Calu3 (cell line): ENCODE measurements at regions of chr5 and their contacts with region 1.

Region 1: GRCh38 chr5:127492854-127493738 is 24.3 kb upstream of the PRRC1 start:
- DNase-seq: no peak
- H3K4me3 Mint-ChIP-seq: no peak overlapping the region
- H3K27ac Mint-ChIP-seq: no peak overlapping the region
- H3K4me1 Mint-ChIP-seq: no peaks in the 10 kb centered on the region
- H3K27me3 Mint-ChIP-seq: peaks cover 45% of the 10 kb centered on the region
- CTCF ChIP-seq: peak; percentile 95

Region 2: DNA sequence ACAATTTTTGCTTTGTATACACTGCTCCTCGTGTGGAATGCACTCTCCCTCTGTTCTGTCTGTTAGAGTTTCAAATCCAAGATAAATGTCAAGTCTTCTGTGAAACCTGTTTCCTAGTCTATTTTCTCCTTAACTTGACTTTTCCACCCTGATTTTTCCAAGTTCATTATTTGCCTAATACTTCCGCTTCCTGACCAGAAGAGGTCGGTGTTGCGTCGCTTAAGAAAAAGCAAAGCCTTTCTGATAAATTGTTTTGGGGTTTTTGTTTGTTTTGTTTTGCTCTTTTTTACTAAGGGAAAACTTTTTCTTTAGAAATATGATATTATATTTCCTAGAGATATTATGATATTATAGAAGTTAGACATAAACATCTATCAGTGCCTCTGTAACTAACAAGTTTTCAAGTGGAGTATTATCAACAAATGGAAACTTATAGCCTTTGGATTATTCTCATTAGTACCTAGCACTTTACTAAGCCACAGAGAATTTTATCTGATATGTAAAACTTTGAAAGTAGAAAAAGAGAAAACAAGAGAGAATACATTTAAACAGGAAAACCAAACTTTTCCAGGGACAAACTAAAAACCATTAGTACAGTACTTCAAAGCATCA is 836.6 kb before region 1 on chr5:
- CTCF ChIA-PET with region 1: no interaction called
- intact Hi-C with region 1: loop called (anchors 5 kb)
- DNase-seq: peak; percentile 13
- H3K4me3 Mint-ChIP-seq: no peak overlapping the region
- H3K27ac Mint-ChIP-seq: no peak overlapping the region
- H3K4me1 Mint-ChIP-seq: no peaks in the 10 kb centered on the region
- H3K27me3 Mint-ChIP-seq: no peaks in the 10 kb centered on the region
- CTCF ChIP-seq: peak; percentile 82

Region 3: GRCh38 chr5:126837906-126838539 is 655.1 kb before region 1 on chr5:
- CTCF ChIA-PET with region 1: no interaction called
- intact Hi-C with region 1: loop called (anchors 10 kb)
- DNase-seq: no peak
- H3K4me3 Mint-ChIP-seq: no peak overlapping the region
- H3K27ac Mint-ChIP-seq: no peak overlapping the region
- H3K4me1 Mint-ChIP-seq: no peaks in the 10 kb centered on the region
- H3K27me3 Mint-ChIP-seq: no peaks in the 10 kb centered on the region
- CTCF ChIP-seq: no peak

Region 4: GRCh38 chr5:127153031-127153430 is 340.1 kb before region 1 on chr5:
- CTCF ChIA-PET with region 1: no interaction called
- intact Hi-C with region 1: no loop called
- DNase-seq: no peak
- H3K4me3 Mint-ChIP-seq: no peak overlapping the region
- H3K27ac Mint-ChIP-seq: no peak overlapping the region
- H3K4me1 Mint-ChIP-seq: no peaks in the 10 kb centered on the region
- H3K27me3 Mint-ChIP-seq: no peaks in the 10 kb centered on the region
- CTCF ChIP-seq: no peak

Region 5: DNA sequence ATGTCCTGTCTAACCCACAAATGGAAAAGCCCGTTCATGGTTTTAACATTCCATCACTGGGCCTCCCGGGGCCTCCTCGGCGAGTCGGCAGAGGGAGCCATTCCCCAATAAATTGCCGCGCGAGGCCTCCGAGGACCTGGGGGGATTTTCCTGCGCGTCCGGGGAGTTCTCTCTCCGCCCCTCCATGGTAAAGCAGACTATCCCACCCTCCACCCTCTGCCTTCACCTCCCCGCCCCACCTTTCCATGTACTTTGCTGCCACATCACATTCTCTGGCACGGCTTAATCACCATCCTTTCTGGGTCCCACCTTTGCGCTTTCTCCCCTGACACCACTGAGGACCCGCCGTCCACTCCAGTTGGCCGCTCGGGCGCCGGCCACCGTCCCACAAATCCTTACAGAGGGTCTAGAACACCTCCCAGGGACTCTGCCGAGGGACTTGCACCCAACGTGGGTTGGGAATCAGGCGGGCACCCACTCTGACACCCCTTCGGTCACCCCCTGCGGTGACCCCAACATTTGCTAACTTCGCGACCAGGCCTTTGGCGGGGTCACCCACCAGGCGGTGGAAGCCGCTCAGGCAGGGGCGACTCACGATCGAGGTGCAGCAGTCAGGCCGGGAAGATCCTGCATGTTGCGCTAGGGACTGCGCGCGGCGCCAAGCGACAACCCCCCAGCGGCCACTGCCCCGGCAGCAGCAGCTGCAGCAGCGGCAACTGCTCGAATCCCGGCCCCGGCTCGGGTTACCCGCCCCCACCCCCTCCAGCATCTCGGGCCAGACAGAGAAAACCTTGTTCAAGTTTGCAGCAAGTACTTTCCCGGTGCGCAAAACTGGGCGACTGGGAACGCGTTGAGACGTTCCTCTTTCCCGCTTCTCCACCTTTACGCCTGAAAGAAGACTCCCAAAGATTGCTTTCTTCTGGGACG is 202.8 kb before region 1 on chr5 and contains the start of gene MEGF10:
- CTCF ChIA-PET with region 1: interaction called, 5 read pairs
- intact Hi-C with region 1: loop called (anchors 1 kb)
- DNase-seq: peak; percentile 77
- H3K4me3 Mint-ChIP-seq: peak within 1 kb of the TSS; percentile 79
- H3K27ac Mint-ChIP-seq: no peak within 1 kb of the TSS
- H3K4me1 Mint-ChIP-seq: peaks cover 10% of the 10 kb centered on the region
- H3K27me3 Mint-ChIP-seq: peaks cover 80% of the 10 kb centered on the region
- CTCF ChIP-seq: peak; percentile 86
- total RNA-seq, gene MEGF10: 0.56 and 0.71 TPM in 2 replicates

Region 6: DNA sequence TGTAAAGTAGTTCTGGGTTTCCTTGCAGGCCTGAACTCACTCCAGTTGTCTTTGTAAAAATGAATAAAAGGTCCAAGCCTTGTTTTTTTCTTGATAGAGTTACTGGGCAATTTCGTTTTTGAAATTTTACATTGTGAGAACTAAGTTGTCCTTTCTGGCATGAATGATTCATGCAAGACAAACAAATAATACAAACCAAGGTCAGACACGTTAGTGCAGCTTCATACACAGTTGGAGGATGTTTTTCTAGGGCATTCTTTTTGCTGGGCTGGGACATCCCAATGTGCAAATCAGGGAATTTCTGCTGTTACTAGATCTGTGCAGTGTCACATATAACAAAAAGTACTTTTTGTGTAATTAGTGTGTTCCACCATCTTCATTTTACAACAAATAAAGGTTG is 106.5 kb before region 1 on chr5:
- CTCF ChIA-PET with region 1: no interaction called
- intact Hi-C with region 1: loop called (anchors 5 kb)
- DNase-seq: no peak
- H3K4me3 Mint-ChIP-seq: no peak overlapping the region
- H3K27ac Mint-ChIP-seq: no peak overlapping the region
- H3K4me1 Mint-ChIP-seq: no peaks in the 10 kb centered on the region
- H3K27me3 Mint-ChIP-seq: no peaks in the 10 kb centered on the region
- CTCF ChIP-seq: no peak

Region 7: DNA sequence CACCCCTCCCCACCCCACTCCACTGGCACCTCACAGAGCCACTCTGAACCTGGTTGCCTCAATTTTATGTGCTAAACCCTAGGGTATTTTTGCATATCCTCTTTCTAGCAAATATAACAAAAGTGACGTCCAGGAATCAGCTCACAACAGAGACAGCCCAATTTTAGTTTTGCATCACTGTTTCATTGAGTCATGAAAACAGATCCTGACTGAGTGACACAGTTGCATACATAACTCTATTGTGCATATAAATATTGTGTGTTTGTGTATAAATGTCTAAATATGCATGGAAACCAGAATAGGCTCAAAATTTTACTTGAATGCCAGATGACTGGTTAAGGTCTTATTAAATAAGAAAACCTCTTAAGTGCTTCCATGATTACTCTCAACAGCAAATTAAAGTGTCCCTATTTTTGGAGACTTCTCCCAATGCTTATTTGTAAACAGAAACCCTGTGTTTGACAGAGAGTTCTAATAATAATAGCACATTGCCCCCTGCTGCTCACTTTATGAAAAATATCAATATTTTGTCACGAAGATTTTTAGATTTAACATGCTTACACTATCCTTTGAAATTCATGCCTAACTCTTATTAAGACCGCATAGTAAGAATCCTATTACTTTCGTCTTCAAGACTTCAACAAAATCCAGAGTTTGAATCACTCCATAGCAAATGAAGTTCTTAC is 51.2 kb before region 1 on chr5:
- CTCF ChIA-PET with region 1: interaction called, 8 read pairs
- intact Hi-C with region 1: loop called (anchors 5 kb)
- DNase-seq: no peak
- H3K4me3 Mint-ChIP-seq: no peak overlapping the region
- H3K27ac Mint-ChIP-seq: no peak overlapping the region
- H3K4me1 Mint-ChIP-seq: peaks cover 16% of the 10 kb centered on the region
- H3K27me3 Mint-ChIP-seq: no peaks in the 10 kb centered on the region
- CTCF ChIP-seq: peak; percentile 38